Activated CD4-positive, alpha-beta T cell treated with anti-CD3 and anti-CD28 coated beads, Interleukin-2, amount 10 ng/mL, durations not matched to agents 24 days and 14 days (primary cell): ENCODE measurements at regions of chr3 and their contacts with region 1.

Region 1: GRCh38 chr3:136250226-136250902 is at the start of gene PCCB:
- DNase-seq: peak; percentile 97
- H3K4me3 Mint-ChIP-seq: peak within 1 kb of the TSS; percentile 91
- H3K27ac Mint-ChIP-seq: peak within 1 kb of the TSS; percentile 95
- H3K4me1 Mint-ChIP-seq: peaks cover 16% of the 10 kb centered on the region
- H3K27me3 Mint-ChIP-seq: no peaks in the 10 kb centered on the region
- total RNA-seq, gene PCCB: 45.4 and 55.9 TPM in 2 replicates

Region 2: DNA sequence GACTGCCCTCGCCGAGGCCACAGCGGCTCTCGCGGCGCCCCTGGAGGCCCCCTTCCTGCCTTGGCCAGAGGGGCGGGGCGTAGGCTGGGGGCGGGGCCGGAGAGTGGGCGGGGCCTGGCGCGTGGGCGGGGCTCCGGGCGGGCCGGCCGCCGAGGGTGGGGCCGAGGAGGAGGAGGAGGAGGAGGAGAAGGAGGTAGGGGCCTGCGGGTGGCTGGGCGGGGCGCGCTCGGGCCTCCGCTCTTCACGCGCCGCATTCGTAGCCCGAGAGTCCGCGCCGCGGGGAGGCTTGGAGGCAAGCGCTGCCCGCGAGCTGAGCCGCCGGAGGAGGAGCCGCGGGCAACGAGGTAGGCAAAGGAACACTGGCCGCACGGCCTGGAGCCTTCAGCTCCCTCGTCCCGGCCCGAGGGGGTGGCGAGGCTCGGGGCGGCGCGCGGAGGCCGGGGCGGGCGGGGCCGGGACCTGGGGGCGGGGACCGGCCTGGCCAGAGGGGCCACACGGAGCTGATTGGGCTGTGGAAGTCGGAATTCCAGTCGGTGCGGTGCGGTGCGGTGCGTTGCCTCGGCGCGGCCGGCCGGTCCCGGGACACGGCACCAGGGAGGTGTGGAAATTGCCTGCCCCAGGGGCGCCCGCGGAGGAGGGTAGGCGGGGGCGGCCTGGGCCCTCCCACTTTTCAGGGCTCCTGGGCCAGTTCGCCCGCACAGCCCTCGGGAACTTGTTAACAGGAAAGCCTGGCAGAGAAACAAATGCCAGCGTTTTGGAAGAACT is 284.7 kb before region 1 on chr3 and contains the start of gene PPP2R3A:
- intact Hi-C with region 1: loop called (anchors 2 kb)
- DNase-seq: peak; percentile 89
- H3K4me3 Mint-ChIP-seq: peak within 1 kb of the TSS; percentile 76
- H3K27ac Mint-ChIP-seq: peak within 1 kb of the TSS; percentile 35
- H3K4me1 Mint-ChIP-seq: peaks cover 10% of the 10 kb centered on the region
- H3K27me3 Mint-ChIP-seq: peaks cover 38% of the 10 kb centered on the region
- total RNA-seq, gene PPP2R3A: 0.28 and 0.49 TPM in 2 replicates

Region 3: DNA sequence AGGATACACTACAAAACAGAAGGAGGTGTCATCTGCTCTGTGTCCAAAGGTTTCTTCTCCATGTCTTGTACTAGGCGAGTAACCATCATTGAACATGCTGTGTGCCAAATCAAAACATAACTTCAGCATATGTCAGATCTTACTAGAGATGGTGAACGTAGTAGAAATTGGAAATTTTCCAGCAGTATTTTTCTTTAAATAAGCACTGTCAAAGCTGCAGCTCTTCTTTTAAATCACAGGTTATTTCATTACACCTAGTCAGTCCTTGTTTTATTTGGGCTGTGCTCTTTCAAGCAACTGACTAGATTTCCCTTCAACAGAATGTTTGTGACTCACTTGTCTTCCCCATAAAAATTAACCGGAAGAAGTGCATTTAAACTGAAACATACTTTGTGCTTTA is 100.7 kb before region 1 on chr3:
- intact Hi-C with region 1: loop called (anchors 5 kb)
- DNase-seq: no peak
- H3K4me3 Mint-ChIP-seq: no peak overlapping the region
- H3K27ac Mint-ChIP-seq: peak overlapping the region; percentile 3
- H3K4me1 Mint-ChIP-seq: peaks cover 36% of the 10 kb centered on the region
- H3K27me3 Mint-ChIP-seq: no peaks in the 10 kb centered on the region

Region 4: DNA sequence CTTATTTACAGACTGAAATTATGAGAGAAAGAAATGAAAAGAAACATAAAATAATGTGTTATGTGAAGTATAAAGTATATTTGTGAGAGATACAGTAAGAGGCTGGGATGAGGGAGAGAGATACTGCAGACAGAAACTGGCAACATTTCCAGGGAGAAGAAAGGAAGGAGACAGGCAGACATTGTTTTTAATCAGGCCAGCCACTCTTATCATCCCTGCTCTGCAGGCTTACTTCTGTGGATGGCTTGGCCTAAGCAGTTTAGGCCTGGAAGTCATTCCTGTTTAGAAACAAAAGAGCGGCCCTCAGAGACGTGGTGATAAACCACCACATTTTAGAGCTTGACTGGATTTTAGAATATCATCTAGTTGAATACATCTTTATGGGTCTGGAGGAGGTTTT is 12.2 kb after region 1 on chr3:
- intact Hi-C with region 1: no loop called
- DNase-seq: no peak
- H3K4me3 Mint-ChIP-seq: no peak overlapping the region
- H3K27ac Mint-ChIP-seq: no peak overlapping the region
- H3K4me1 Mint-ChIP-seq: peaks cover 2% of the 10 kb centered on the region
- H3K27me3 Mint-ChIP-seq: no peaks in the 10 kb centered on the region

Region 5: DNA sequence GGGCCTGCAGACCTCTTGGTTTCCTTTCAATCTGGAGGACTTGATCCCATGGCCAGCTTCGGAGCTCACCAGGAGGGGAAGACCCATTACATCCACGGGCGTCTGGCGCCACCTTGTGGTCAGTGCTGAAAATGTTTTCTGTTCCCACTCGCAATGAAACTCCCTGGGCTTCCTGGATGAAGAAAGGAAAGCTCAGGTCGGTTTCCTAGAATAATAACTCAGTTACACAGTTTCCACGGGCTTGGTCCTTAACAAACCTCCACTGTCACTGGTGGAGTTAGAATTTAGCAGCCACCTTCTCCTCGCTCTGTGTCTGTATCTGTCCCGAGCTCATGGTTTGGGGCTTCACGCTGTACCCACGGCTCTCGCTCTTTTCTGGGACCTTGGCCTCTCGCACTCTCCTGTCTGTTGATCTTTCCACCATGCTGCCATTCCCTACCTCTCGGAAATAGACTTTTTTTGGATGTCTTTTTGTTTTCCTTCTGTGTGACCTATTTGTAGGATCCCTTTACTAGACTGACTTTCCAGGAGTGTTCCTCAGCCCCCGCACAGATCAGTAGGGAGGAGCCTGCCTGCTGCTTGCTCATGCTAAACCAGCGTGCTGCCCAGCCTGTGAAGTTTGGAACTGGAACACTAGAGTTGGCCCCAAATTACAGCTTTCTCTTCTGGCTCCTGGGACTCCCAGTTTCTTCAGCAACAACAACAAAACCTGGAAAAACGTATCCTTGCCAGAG is 763.8 kb after region 1 on chr3:
- intact Hi-C with region 1: loop called (anchors 1 kb)
- DNase-seq: peak; percentile 95
- H3K4me3 Mint-ChIP-seq: peak overlapping the region; percentile 77
- H3K27ac Mint-ChIP-seq: no peak overlapping the region
- H3K4me1 Mint-ChIP-seq: peaks cover 10% of the 10 kb centered on the region
- H3K27me3 Mint-ChIP-seq: peaks cover 3% of the 10 kb centered on the region